ENCODE measurements at regions of chr3 and their contacts with region 1.

Region 1: GRCh38 chr3:107767897-107768605 is 245.3 kb downstream of the BBX start:
- DNase-seq: peak in 1 of 5 donors; percentile 31
- H3K4me3 ChIP-seq: no peak overlapping the region
- H3K27ac ChIP-seq: peak overlapping the region in 1 of 2 donors; percentile 52
- H3K4me1 ChIP-seq: peaks cover 4% of the 10 kb centered on the region
- H3K27me3 ChIP-seq: no peaks in the 10 kb centered on the region
- CTCF ChIP-seq: no peak
- EP300 ChIP-seq: no peak
- POLR2A ChIP-seq: no peak

Region 2: DNA sequence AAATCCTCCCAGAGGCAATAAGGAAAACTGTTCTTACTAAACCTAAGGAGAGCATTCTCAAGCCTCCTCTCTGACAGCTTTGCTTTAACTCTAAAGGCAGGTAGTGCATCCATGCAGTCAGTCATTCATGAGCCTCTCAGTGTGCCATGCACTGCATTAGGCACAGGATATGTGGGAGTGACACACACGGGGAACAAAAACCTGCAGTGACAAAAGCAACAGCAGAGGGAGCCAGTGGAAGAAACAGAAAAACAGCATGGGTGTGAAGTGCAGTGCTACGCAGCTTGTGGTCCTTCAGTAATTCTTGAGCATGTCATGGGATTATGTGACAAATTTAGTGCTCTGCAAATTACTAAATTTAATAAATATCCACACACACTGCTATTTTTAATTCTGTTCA is 14.6 kb before region 1 on chr3:
- intact Hi-C with region 1: no loop called
- DNase-seq: peak in 2 of 5 donors; percentile 23 to 40
- H3K4me3 ChIP-seq: no peak overlapping the region
- H3K27ac ChIP-seq: no peak overlapping the region
- H3K4me1 ChIP-seq: peaks cover 3% of the 10 kb centered on the region
- H3K27me3 ChIP-seq: no peaks in the 10 kb centered on the region
- CTCF ChIP-seq: peak in 1 of 3 donors; percentile 6
- EP300 ChIP-seq: no peak
- POLR2A ChIP-seq: no peak

Region 3: GRCh38 chr3:107833043-107833442 is 65.0 kb after region 1 on chr3:
- intact Hi-C with region 1: loop called in 1 of 4 experiments (anchors 2 kb)
- DNase-seq: peak; percentile 28 to 78 (median 60)
- H3K4me3 ChIP-seq: no peak overlapping the region
- H3K27ac ChIP-seq: peak overlapping the region in 1 of 2 donors; percentile 9
- H3K4me1 ChIP-seq: peaks cover 3% of the 10 kb centered on the region
- H3K27me3 ChIP-seq: no peaks in the 10 kb centered on the region
- CTCF ChIP-seq: no peak
- EP300 ChIP-seq: no peak
- POLR2A ChIP-seq: no peak

Region 4: GRCh38 chr3:107910713-107911259 is 142.7 kb after region 1 on chr3:
- intact Hi-C with region 1: no loop called
- DNase-seq: no peak
- H3K4me3 ChIP-seq: no peak overlapping the region
- H3K27ac ChIP-seq: no peak overlapping the region
- H3K4me1 ChIP-seq: peaks cover 2% of the 10 kb centered on the region
- H3K27me3 ChIP-seq: no peaks in the 10 kb centered on the region
- CTCF ChIP-seq: no peak
- EP300 ChIP-seq: no peak
- POLR2A ChIP-seq: no peak

Region 5: GRCh38 chr3:107978131-107979055 is 210.3 kb after region 1 on chr3:
- intact Hi-C with region 1: no loop called
- DNase-seq: no peak
- H3K4me3 ChIP-seq: no peak overlapping the region
- H3K27ac ChIP-seq: no peak overlapping the region
- H3K4me1 ChIP-seq: no peaks in the 10 kb centered on the region
- H3K27me3 ChIP-seq: no peaks in the 10 kb centered on the region
- CTCF ChIP-seq: no peak
- EP300 ChIP-seq: no peak
- POLR2A ChIP-seq: no peak